ENCODE measurements at regions of chr3 and their contacts with region 1.

Region 1: DNA sequence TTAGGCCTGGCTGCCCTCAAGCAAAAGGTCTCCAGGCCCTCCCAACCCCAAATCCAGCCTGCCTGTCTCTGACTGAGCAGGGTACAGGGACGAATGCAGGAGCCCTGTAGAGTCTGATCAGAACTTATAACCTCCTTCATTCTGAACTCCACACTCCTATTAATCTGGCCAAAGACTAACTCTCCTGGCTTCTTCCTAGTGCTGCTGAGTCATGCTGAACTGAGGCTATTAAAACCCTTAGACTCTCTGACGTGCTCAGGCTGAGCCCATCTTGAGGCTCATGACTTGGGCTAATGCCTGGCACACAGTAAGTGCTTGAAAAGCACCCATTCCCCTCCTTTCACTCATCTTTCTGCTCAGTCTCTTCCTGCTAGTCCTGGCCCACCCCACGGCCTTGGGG is 81.9 kb downstream of the NUP210 start:
- DNase-seq: no peak
- H3K4me3 ChIP-seq: no peak overlapping the region
- CTCF ChIP-seq: no peak

Region 2: DNA sequence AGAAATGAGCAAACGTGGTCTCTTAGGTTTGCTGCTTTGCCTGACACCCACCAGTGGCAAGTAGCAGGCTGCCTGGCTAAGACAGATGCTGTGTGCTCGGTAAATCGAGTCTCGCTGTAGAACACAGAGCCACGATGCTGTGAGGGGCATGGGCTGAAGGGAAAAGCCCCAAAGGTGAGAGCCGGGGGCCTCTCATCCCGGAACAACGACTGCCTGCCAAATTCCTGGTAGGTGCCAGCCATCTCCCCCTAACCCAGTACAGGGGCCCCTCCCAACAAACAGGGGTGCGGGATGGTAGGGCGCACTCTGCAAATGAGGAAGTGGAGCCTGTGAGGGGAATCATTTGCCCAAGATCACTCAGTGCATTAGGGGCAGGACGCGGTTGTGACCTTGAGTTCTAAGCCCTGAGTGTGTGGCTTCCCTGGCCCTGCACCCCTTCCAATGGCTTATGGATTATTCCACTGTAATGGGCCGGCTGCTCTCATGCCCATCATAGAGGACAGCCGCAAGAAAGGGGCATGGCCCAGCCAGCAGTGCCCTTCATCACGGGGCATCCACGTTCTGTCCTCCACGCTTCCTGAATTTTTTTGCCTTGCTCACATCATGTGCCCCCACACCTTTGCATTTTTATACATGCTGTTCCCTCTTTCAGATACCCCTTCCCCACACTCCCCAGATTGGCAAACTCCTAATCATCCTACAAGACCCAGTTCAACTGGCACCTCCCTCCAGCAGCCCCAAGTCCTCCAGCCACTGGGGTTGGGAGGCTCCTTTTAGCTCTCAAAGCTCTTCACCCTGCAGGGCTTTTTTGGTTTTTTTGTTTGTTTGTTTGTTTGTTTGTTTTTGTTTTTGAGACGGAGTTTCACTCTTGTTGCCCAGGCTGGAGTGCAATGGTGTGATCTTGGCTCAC is 43.5 kb before region 1 on chr3:
- in situ Hi-C with region 1: loop called (anchors 5 kb)
- DNase-seq: no peak
- H3K4me3 ChIP-seq: no peak overlapping the region
- CTCF ChIP-seq: no peak

Region 3: DNA sequence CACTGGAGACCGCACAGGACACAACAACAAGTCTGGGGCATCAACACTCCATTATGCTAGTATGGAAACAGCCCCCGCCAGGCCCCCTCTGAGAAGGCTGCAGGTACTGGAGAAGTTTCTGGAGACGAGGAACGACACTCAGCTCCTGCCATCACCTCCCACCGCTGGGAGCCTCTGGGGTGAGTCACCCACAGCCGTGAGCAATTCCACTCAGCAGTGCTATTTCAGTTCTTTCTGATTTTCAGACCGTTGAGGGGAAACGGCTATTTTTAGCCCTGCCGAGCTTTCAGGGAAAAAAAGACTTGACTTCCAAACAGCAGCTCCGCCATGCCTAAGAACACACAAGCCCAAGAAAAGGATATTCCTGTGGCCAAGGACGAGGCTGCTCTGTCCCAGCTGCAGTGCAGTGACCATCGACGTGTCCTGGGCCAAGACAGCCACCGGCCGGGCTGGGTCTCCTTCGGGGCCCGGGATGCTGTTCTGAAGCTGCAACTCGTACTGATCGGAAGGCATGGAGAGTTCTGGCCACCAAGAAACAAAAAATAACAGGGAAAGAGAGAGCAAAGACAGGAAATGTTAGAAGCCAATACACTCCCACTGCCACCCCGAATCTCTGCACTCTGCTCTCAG is 41.1 kb after region 1 on chr3:
- in situ Hi-C with region 1: no loop called
- DNase-seq: peak; percentile 41
- H3K4me3 ChIP-seq: no peak overlapping the region
- CTCF ChIP-seq: no peak

Region 4: DNA sequence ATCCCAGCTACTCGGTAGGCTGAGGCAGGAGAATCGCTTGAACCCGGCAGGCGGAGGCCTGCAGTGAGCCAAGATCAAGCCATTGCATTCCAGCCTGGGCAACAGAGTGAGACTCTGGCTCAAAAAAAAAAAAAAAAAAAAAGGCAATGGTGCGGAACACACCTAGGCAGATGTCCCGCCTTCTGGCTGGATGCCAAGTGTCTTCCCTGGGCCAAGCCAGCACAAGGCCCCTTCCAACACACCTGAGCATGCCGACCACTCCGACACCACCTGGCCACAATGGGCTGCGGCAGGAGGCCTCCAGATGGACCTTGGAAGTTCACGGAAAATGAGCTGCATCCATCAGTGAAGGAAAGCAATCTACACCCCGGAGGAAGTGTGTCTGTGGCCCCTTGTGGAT is 62.9 kb after region 1 on chr3:
- in situ Hi-C with region 1: no loop called
- DNase-seq: no peak
- H3K4me3 ChIP-seq: no peak overlapping the region
- CTCF ChIP-seq: no peak